H1 (cell line): ENCODE measurements at regions of chr16 and their contacts with region 1.

Region 1: DNA sequence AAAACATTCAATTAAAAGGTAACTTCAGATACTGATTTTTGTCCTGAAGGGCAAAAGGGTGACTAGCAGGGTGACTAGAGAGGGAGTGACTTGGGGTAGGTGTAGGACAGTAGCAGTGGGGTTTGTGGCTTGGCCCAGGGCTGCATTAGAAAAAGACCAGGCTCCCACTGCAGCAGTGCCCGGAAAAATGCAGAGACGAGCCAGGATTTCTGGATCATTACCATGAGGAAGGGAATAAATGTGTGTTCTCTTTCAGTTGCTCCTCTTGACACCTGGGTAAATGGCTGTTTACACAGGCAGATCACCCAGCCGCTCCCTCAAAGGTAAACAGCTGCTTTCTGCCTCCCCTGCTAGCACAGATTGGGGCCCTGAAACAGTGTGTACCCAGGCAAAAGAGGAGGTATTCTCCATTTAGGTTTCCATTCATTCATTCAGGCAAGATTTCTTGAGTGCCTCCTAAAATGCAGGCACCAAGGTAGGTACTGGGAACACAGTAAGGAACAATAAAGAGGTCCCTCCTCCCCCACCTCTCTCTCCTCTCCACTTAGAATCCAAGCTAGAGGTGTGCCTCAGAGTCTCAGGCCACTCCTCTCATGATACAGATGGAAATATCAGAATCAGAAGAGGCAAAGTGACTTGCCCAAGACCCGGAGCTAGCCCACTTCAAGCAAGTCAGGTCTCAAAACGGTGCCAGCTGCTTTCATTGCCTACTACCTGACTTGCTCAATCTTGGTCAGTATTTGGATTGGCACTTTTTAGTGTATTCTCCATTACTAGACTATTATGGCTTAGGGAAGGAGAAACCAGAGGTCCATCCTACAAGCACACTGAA is 15.2 kb upstream of the TOX3 start:
- DNase-seq: no peak
- H3K4me3 ChIP-seq: no peak overlapping the region
- H3K27ac ChIP-seq: no peak overlapping the region
- H3K4me1 ChIP-seq: peaks cover 4 to 6% (median 6%) of the 10 kb centered on the region in 4 experiments; a peak in 5 of 7 replicates
- H3K27me3 ChIP-seq: no peaks in the 10 kb centered on the region
- CTCF ChIP-seq: no peak
- EP300 ChIP-seq: no peak
- POLR2A ChIP-seq: no peak
- RAD21 ChIP-seq: no peak

Region 2: DNA sequence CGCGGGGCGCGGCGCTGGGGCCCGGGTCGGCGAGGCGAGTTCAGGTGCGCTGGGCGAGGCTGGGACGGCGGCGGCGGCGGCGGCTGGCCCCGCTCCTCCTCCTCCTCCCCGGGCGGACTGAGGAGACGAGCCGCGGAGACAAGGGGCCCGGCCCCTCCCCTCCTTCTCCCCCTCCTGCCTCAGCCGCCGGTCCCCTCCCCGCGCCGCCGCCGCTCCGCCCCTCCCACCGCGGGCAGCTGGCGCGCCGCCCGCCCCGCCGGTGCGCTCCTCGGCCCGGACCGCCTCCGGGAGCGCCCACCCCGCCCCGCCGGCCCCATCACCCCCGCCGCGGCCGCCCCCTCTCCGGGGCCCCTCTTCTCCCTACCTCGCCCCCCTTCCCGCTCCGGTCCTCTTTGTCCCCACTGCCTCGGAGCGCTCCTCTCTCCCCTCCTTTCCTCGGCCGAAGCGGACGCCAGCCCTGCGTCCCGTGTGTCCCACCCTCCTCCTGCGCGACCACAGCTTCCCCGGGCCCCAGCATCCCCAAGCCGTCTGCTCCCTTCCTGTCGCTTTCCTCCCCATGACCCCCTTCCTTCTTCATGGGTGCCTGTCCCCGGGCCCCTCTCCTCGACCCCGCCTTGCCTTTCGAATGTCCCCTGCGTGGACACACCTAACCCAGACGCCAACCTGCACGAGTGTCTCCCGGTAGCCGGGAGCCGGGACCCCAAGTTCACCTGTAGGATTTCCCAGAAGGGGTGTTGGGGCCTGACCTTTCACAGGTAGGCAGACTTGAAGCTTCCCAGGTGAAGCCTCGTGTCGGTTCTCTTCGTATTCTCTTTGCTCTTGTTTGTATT is 14.9 kb before region 1 on chr16 and contains the start of gene TOX3:
- CTCF ChIA-PET with region 1: interaction called, 10 read pairs
- POLR2A ChIA-PET with region 1: interaction called, 3 read pairs
- DNase-seq: peak in 1 of 2 experiments; percentile 67
- H3K4me3 ChIP-seq: peak within 1 kb of the TSS; percentile 80 to 97 (median 82)
- H3K27ac ChIP-seq: peak within 1 kb of the TSS; percentile 15; the same call in 1 of the 2 replicates
- H3K4me1 ChIP-seq: peaks cover 0 to 14% (median 7%) of the 10 kb centered on the region in 4 experiments; a peak in 5 of 7 replicates
- H3K27me3 ChIP-seq: peaks cover 0 to 14% (median 12%) of the 10 kb centered on the region in 4 experiments; a peak in 5 of 7 replicates
- CTCF ChIP-seq: no peak
- EP300 ChIP-seq: no peak
- POLR2A ChIP-seq: no peak; a peak in 2 of 3 replicates
- RAD21 ChIP-seq: no peak
- total RNA-seq, gene TOX3: 16.7 and 21.2 TPM in 2 replicates